Heart right ventricle (tissue), 16 donors: ENCODE measurements at regions of chr15 and their contacts with region 1.

Region 1: GRCh38 chr15:23642413-23643044 is 5.1 kb downstream of the MAGEL2 start:
- DNase-seq: peak; percentile 30 to 43
- ATAC-seq: peak; percentile 50 to 80 (median 70)
- H3K4me3 ChIP-seq: no peak overlapping the region
- H3K27ac ChIP-seq: no peak overlapping the region
- H3K4me1 ChIP-seq: peaks cover 0 to 3% (median 0%) of the 10 kb centered on the region in 9 donors
- H3K27me3 ChIP-seq: peaks cover 0 to 28% (median 13%) of the 10 kb centered on the region in 7 donors
- CTCF ChIP-seq: peak; percentile 63 to 86 (median 81)

Region 2: GRCh38 chr15:23857028-23857641 is 214.6 kb after region 1 on chr15:
- intact Hi-C with region 1: loop called in 6 of 10 experiments (anchors 5 to 10 kb)
- DNase-seq: peak in 1 of 2 donors; percentile 34
- ATAC-seq: no peak
- H3K4me3 ChIP-seq: no peak overlapping the region
- H3K27ac ChIP-seq: no peak overlapping the region
- H3K4me1 ChIP-seq: no peaks in the 10 kb centered on the region
- H3K27me3 ChIP-seq: peaks cover 0 to 19% (median 3%) of the 10 kb centered on the region in 7 donors
- CTCF ChIP-seq: peak in 7 of 9 donors; percentile 32 to 56 (median 36)

Region 3: GRCh38 chr15:23866832-23867231 is 224.3 kb after region 1 on chr15:
- intact Hi-C with region 1: loop called in 6 of 10 experiments (anchors 5 to 10 kb)
- DNase-seq: no peak
- ATAC-seq: no peak
- H3K4me3 ChIP-seq: no peak overlapping the region
- H3K27ac ChIP-seq: no peak overlapping the region
- H3K4me1 ChIP-seq: no peaks in the 10 kb centered on the region
- H3K27me3 ChIP-seq: peaks cover 0 to 20% (median 8%) of the 10 kb centered on the region in 7 donors
- CTCF ChIP-seq: peak in 3 of 9 donors; percentile 22 to 45 (median 31)

Region 4: DNA sequence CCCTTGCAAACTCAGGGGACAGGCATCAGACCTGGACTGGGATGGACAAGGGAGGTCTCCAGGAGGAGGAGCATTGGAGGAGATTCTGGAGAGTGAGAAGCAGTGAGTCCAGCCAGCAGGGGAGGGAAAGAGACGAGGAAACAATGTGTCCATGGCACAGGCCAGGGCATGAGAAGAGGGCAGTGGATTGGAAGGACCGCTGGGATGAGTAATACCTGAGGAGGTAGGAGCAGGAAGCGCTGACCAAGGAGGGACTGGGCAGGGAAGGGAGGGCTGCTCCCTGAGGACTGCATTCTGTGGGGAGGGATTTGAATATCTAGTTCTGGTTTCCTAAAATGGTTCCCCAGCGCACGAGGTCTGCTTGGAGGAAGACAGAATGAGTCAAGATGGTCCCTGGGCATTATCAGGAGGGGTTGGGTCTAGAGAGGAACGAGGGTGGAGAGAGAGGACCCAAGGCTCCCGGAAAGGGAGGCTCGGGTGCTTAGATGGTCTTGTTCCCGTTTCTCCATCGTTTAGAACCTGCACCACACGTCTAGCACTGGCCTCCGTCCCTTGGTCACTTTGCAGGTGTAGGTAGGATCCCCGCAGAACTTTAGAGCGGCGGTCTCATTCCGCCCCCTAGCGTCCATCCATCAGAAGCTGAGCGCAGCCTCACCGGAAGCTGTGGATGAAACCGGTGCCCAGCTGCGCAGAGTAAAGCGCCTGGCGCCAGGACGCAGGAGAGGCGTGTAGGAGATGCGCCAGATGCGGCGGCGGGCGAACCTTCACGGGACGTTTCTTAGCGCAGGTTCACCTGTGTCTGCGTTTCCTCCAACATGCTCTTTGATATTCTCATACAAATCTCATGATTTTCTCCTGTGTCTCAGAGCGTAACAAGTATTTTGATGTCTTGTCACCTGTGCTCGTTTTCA is 235.2 kb after region 1 on chr15:
- intact Hi-C with region 1: loop called in 2 of 10 experiments (anchors 2 to 5 kb)
- DNase-seq: peak; percentile 22 to 31
- ATAC-seq: peak in 6 of 8 donors; percentile 53 to 81 (median 62)
- H3K4me3 ChIP-seq: no peak overlapping the region
- H3K27ac ChIP-seq: no peak overlapping the region
- H3K4me1 ChIP-seq: no peaks in the 10 kb centered on the region
- H3K27me3 ChIP-seq: peaks cover 0 to 10% (median 0%) of the 10 kb centered on the region in 7 donors
- CTCF ChIP-seq: peak; percentile 41 to 65 (median 58)